Activated CD4-positive, alpha-beta T cell treated with anti-CD3 and anti-CD28 coated beads for 36 hours (primary cell): ENCODE measurements at regions of chr17 and their contacts with region 1.

Region 1: DNA sequence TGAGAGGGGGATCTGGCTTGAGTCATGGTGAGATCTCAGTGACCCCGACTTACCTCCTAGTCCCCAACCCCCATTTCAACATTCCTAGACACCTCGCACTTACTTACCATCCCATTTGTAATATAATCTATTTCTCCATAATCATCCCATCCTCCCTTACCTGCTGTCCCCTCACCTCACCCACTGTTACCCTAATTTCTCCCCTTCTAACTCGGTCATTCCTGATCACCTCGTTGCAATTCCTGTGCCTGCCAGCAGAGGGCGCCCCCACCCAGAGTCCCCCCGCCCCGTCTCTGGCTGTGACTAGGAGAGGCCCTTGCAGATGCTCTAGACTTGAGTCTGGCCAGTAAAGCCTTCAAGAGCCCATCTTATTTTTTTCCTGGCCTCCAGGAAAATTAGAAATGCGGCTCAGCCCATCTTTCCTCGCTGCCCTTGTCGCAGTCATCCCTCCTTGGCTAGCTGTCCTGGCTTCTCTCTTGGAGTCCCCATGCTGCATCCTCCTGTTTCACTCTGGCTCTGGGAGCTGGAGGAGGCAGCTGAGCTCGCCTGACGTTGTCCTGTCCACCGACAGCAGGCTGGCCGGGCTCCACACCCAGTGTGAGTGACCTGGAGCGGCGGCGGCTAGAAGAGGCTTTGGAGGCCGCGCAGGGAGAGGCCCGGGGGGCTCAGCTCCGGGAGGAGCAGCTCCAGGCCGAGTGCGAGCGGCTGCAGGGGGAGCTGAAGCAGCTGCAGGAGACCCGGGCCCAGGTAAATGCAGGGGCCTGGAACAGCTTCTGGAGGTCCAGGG is 5.0 kb downstream of the TBKBP1 start:
- DNase-seq: peak; percentile 91
- ATAC-seq: peak; percentile 37
- H3K4me3 Mint-ChIP-seq: no peak overlapping the region
- H3K27ac Mint-ChIP-seq: peak overlapping the region; percentile 35
- H3K4me1 Mint-ChIP-seq: peaks cover 78% of the 10 kb centered on the region
- H3K27me3 Mint-ChIP-seq: no peaks in the 10 kb centered on the region

Region 2: GRCh38 chr17:47675380-47676198 is 23.4 kb before region 1 on chr17:
- CTCF ChIA-PET with region 1: interaction called, 31 read pairs
- POLR2A ChIA-PET with region 1: interaction called, 3 read pairs
- intact Hi-C with region 1: no loop called
- DNase-seq: no peak
- ATAC-seq: peak; percentile 43
- H3K4me3 Mint-ChIP-seq: no peak overlapping the region
- H3K27ac Mint-ChIP-seq: peak overlapping the region; percentile 77
- H3K4me1 Mint-ChIP-seq: peaks cover 19% of the 10 kb centered on the region
- H3K27me3 Mint-ChIP-seq: no peaks in the 10 kb centered on the region

Region 3: DNA sequence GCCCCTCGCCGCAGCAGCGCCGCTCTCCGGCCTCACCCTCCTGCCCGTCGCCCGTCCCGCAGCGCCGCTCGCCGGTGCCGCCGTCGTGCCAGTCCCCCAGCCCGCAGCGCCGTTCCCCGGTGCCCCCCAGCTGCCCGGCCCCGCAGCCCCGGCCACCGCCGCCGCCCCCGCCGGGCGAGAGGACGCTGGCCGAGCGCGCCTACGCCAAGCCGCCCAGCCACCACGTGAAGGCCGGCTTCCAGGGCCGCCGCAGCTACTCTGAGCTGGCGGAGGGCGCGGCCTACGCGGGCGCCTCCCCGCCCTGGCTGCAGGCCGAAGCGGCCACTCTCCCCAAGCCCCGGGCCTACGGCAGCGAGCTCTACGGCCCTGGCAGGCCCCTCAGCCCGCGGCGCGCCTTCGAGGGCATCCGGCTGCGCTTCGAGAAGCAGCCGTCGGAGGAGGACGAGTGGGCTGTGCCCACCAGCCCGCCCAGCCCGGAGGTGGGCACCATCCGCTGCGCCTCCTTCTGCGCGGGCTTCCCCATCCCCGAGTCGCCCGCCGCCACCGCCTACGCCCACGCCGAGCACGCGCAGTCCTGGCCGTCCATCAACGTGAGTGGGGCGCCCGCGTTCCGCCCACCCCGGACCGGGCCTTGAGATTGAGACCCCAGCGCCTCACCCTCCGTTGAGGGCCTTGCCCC is 10.1 kb after region 1 on chr17:
- CTCF ChIA-PET with region 1: interaction called, 117 read pairs
- POLR2A ChIA-PET with region 1: no interaction called
- intact Hi-C with region 1: loop called in 1 of 2 experiments (anchors 1 kb)
- DNase-seq: no peak
- ATAC-seq: no peak
- H3K4me3 Mint-ChIP-seq: no peak overlapping the region
- H3K27ac Mint-ChIP-seq: no peak overlapping the region
- H3K4me1 Mint-ChIP-seq: peaks cover 62% of the 10 kb centered on the region
- H3K27me3 Mint-ChIP-seq: no peaks in the 10 kb centered on the region

Region 4: GRCh38 chr17:47733047-47733673 is 34.2 kb after region 1 on chr17 and contains the start of gene TBX21:
- CTCF ChIA-PET with region 1: interaction called, 112 read pairs
- POLR2A ChIA-PET with region 1: interaction called, 6 read pairs
- intact Hi-C with region 1: loop called (anchors 1 to 2 kb)
- DNase-seq: peak; percentile 96
- ATAC-seq: peak; percentile 80
- H3K4me3 Mint-ChIP-seq: peak within 1 kb of the TSS; percentile 93
- H3K27ac Mint-ChIP-seq: peak within 1 kb of the TSS; percentile 98
- H3K4me1 Mint-ChIP-seq: peaks cover 63% of the 10 kb centered on the region
- H3K27me3 Mint-ChIP-seq: no peaks in the 10 kb centered on the region
- total RNA-seq, gene TBX21: 73.4 to 76.8 TPM

Region 5: GRCh38 chr17:47789611-47790561 is 90.9 kb after region 1 on chr17:
- CTCF ChIA-PET with region 1: interaction called, 10 read pairs
- POLR2A ChIA-PET with region 1: no interaction called
- intact Hi-C with region 1: loop called in 1 of 2 experiments (anchors 1 kb)
- DNase-seq: peak; percentile 80
- ATAC-seq: peak; percentile 97
- H3K4me3 Mint-ChIP-seq: peak overlapping the region; percentile 63
- H3K27ac Mint-ChIP-seq: no peak overlapping the region
- H3K4me1 Mint-ChIP-seq: peaks cover 10% of the 10 kb centered on the region
- H3K27me3 Mint-ChIP-seq: peaks cover 47% of the 10 kb centered on the region

Region 6: DNA sequence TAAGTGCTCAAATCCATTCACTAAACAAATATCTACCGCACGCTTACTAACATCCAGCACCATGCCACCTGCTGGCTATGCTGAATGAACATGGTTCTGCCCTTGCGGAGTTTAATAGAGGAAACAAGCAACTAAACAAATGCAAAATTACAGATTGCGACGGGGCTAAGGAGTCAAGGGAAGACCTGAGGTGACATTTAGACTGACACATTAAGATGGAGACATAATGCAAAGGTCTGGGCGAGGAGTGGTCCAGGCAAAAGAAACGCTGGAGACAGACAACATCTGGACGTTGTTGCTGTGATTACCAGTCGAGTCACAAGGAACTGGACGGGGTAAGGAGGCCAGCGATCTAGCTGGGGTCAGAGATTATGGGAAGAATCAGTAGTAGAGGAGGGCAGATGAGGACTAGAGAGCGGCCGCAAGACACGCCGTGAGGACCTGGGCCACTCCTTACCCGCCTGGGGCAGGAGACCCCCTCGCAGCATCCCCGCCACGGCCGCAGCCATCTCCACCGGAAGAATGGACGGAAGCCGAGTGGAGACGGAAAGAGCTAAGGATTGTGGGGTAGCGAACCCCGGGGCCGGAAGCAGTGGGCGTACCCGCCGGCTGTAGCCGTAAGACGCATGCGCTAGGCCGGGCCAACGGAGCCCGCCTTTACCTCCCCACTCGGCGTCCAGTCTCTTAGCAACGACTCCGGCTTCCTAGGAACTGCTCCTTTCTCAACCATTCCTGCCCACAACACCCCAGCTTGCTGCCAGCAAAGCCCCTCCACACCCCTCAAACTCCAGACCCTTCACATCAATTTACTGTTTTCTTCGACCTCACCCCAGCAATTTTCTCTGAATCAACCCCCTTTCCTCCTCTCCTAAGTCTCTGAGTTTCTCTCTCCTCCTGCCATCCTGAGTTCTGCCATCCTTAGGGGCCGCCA is 132.3 kb after region 1 on chr17 and contains the starts of genes LRRC46 and MRPL10:
- CTCF ChIA-PET with region 1: interaction called, 5 read pairs
- POLR2A ChIA-PET with region 1: no interaction called
- intact Hi-C with region 1: loop called in 1 of 2 experiments (anchors 1 kb)
- DNase-seq: peak; percentile 96
- ATAC-seq: peak; percentile 94
- H3K4me3 Mint-ChIP-seq: peak within 1 kb of the TSS; percentile 88
- H3K27ac Mint-ChIP-seq: peak within 1 kb of the TSS; percentile 88
- H3K4me1 Mint-ChIP-seq: peaks cover 57% of the 10 kb centered on the region
- H3K27me3 Mint-ChIP-seq: no peaks in the 10 kb centered on the region
- total RNA-seq, gene LRRC46: 0.46 to 0.82 TPM
- total RNA-seq, gene MRPL10: 66.9 to 70.9 TPM